ENCODE measurements at regions of chr20 and their contacts with region 1.

Region 1: DNA sequence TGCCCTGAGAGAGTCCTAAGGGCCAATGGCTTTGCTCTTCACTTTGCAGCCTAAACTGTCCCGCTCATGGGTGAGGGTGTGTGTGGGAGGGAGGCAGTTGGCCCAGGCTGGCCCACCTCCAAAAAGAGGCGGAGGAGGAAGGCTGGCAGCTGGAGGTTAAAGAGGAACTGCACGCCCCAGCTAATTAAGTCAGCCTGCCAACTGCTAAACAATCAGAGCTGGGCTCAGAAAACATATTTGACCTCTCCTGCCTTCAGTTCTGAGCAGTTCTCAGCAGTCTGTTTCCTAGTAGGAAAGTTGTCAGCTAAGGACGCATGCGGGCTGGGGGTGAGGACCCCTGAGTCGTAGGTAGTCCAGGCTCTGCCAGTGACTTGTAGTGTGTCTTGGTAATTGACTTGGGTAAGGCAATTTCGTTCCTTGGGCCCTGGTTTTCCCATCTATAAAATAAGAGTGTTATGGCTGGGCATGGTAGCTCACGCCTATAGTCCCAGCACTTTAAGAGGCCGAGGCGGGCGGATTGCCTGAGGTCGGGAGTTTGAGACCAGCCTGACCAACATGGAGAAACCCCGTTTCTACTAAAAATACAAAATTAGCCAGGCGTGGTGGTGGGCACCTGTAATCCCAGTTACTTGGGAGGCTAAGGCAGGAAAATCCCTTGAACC is 17.0 kb downstream of the GSS start:
- DNase-seq: no peak
- H3K4me3 ChIP-seq: no peak overlapping the region
- H3K27ac ChIP-seq: no peak overlapping the region
- H3K4me1 ChIP-seq: peaks cover 11% of the 10 kb centered on the region
- H3K27me3 ChIP-seq: no peaks in the 10 kb centered on the region
- CTCF ChIP-seq: no peak

Region 2: GRCh38 chr20:34385464-34385863 is 553.2 kb before region 1 on chr20:
- CTCF ChIA-PET with region 1: no interaction called
- POLR2A ChIA-PET with region 1: no interaction called
- intact Hi-C with region 1: no loop called
- DNase-seq: no peak
- H3K4me3 ChIP-seq: no peak overlapping the region
- H3K27ac ChIP-seq: peak overlapping the region; percentile 76
- H3K4me1 ChIP-seq: peaks cover 48% of the 10 kb centered on the region
- H3K27me3 ChIP-seq: no peaks in the 10 kb centered on the region
- CTCF ChIP-seq: no peak

Region 3: DNA sequence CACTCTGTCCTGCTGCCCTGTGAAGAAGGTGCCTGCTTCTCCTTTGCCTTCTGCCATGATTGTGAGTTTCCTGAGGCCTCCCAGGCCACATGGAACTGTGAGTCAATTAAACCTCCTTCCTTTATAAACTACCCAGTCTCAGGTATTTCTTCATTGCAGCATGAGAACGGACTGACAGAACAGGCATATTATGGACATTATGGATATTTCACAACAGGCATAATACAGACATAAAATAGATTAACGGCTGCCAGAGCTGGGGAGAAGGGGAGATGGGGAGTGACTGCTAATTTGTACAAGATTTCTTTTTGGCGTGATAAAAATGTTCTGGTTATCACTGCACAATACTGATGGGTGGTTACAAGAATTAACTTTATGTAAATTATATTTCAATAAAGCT is 124.5 kb after region 1 on chr20:
- CTCF ChIA-PET with region 1: no interaction called
- POLR2A ChIA-PET with region 1: no interaction called
- intact Hi-C with region 1: no loop called
- DNase-seq: no peak
- H3K4me3 ChIP-seq: no peak overlapping the region
- H3K27ac ChIP-seq: no peak overlapping the region
- H3K4me1 ChIP-seq: no peaks in the 10 kb centered on the region
- H3K27me3 ChIP-seq: no peaks in the 10 kb centered on the region
- CTCF ChIP-seq: no peak

Region 4: DNA sequence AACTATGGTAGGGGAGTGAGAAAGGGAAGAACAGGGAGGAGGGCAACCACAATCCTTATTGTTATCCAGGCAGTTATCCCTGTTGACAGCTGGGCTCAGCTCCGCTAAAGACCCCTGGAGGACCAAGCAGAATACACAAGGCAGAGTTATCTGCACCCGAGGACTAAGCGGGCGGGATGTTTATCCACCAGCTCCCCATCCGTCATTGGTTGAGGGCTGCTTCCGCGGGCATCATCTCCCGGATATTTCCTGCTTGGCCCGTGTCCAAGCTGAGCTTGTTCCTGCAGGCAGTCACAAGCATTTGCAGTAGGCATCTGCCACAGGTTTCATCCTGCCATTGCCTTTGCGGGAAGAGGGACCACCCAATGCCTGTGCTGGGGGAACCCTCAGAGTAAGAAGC is 1469.6 kb after region 1 on chr20:
- CTCF ChIA-PET with region 1: interaction called, 10 read pairs
- POLR2A ChIA-PET with region 1: no interaction called
- intact Hi-C with region 1: no loop called
- DNase-seq: peak in 1 of 2 experiments; percentile 16
- H3K4me3 ChIP-seq: no peak overlapping the region
- H3K27ac ChIP-seq: no peak overlapping the region
- H3K4me1 ChIP-seq: no peaks in the 10 kb centered on the region
- H3K27me3 ChIP-seq: peaks cover 7% of the 10 kb centered on the region
- CTCF ChIP-seq: no peak

Measured in PC-9 (cell line).